GM12878 (cell line): ENCODE measurements at regions of chr3 and their contacts with region 1.

Region 1: GRCh38 chr3:167684388-167684993 is 30.7 kb upstream of the WDR49 start:
- DNase-seq: no peak
- ATAC-seq: peak; percentile 92
- H3K4me3 ChIP-seq: no peak overlapping the region
- H3K27ac ChIP-seq: no peak overlapping the region
- H3K4me1 ChIP-seq: no peaks in the 10 kb centered on the region
- H3K27me3 ChIP-seq: no peaks in the 10 kb centered on the region
- CTCF ChIP-seq: peak; percentile 48 to 58 (median 58); a peak in 5 of 6 replicates
- EP300 ChIP-seq: no peak
- POLR2A ChIP-seq: no peak
- RAD21 ChIP-seq: peak; percentile 51

Region 2: DNA sequence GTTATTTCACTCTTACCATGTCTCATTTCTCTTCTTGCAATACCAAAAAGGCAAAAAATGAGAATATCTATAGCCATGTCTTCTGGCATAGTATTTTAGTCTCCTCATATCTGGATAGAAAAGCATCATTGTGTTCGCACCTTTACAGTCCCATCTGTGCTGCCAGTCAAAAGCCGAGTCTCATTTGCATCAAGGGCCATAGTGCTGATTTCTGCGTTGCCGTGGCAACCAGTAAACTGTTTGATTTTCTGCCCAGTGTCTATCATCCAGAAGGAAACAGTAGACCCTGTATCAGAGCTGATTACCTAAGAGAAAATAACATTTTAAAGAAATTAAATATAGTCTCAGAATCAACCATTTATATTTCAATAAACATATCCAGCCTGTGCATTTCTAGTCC is 124.6 kb before region 1 on chr3:
- CTCF ChIA-PET with region 1: no interaction called
- POLR2A ChIA-PET with region 1: no interaction called
- RAD21 ChIA-PET with region 1: no interaction called
- SMC1A ChIA-PET with region 1: no interaction called
- in situ Hi-C with region 1: no loop called
- intact Hi-C with region 1: no loop called
- DNase-seq: no peak
- ATAC-seq: no peak
- H3K4me3 ChIP-seq: no peak overlapping the region
- H3K27ac ChIP-seq: no peak overlapping the region
- H3K4me1 ChIP-seq: no peaks in the 10 kb centered on the region
- H3K27me3 ChIP-seq: no peaks in the 10 kb centered on the region
- CTCF ChIP-seq: no peak
- EP300 ChIP-seq: no peak
- POLR2A ChIP-seq: no peak
- RAD21 ChIP-seq: no peak

Region 3: DNA sequence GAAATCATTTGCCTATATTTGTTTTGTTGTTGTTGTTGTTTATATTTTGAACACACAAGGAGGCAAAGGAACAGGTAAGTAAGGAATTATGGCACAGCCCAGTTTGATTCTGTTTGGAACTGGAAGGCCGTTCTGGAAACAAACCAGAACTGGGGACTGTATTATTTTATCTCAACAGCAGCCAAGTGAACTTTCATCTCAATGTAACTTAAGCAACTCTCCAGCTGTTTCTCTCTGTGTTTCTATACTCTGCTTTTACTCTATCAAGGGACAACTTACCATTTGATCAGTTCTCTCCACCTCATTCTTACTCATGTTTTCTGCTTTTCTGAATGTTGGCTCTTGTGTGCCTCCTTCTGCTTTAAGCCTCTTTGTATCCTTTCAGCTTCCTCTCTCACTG is 14.8 kb before region 1 on chr3:
- CTCF ChIA-PET with region 1: interaction called, 24 read pairs
- POLR2A ChIA-PET with region 1: no interaction called
- RAD21 ChIA-PET with region 1: no interaction called
- SMC1A ChIA-PET with region 1: interaction called, 5 read pairs
- in situ Hi-C with region 1: no loop called
- intact Hi-C with region 1: no loop called
- DNase-seq: no peak
- ATAC-seq: no peak
- H3K4me3 ChIP-seq: no peak overlapping the region
- H3K27ac ChIP-seq: no peak overlapping the region
- H3K4me1 ChIP-seq: no peaks in the 10 kb centered on the region
- H3K27me3 ChIP-seq: no peaks in the 10 kb centered on the region
- CTCF ChIP-seq: no peak
- EP300 ChIP-seq: no peak
- POLR2A ChIP-seq: no peak
- RAD21 ChIP-seq: no peak

Region 4: DNA sequence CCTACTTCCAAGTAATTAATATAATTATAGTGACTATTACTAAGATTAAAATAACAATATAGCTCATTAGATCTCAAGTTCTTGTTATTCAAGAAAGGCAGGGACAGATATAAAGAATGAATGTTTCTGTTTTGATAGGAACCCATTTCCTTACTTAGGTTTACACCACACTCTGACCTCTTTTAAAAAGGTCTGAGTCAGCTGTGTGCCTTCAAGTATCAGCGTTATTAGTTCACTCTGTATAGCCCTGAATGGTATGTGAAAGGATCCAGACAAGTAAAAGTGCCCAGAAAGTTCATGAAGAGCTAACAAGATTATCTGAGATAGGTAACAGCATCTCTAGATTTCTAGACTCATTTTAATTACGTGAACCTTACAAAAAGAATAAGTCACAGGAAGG is 21.3 kb after region 1 on chr3:
- CTCF ChIA-PET with region 1: interaction called, 18 read pairs
- POLR2A ChIA-PET with region 1: no interaction called
- RAD21 ChIA-PET with region 1: interaction called, 3 read pairs
- SMC1A ChIA-PET with region 1: interaction called, 3 read pairs
- in situ Hi-C with region 1: no loop called
- intact Hi-C with region 1: no loop called
- DNase-seq: no peak
- ATAC-seq: no peak
- H3K4me3 ChIP-seq: no peak overlapping the region
- H3K27ac ChIP-seq: no peak overlapping the region
- H3K4me1 ChIP-seq: no peaks in the 10 kb centered on the region
- H3K27me3 ChIP-seq: no peaks in the 10 kb centered on the region
- CTCF ChIP-seq: no peak
- EP300 ChIP-seq: no peak
- POLR2A ChIP-seq: no peak
- RAD21 ChIP-seq: no peak

Region 5: DNA sequence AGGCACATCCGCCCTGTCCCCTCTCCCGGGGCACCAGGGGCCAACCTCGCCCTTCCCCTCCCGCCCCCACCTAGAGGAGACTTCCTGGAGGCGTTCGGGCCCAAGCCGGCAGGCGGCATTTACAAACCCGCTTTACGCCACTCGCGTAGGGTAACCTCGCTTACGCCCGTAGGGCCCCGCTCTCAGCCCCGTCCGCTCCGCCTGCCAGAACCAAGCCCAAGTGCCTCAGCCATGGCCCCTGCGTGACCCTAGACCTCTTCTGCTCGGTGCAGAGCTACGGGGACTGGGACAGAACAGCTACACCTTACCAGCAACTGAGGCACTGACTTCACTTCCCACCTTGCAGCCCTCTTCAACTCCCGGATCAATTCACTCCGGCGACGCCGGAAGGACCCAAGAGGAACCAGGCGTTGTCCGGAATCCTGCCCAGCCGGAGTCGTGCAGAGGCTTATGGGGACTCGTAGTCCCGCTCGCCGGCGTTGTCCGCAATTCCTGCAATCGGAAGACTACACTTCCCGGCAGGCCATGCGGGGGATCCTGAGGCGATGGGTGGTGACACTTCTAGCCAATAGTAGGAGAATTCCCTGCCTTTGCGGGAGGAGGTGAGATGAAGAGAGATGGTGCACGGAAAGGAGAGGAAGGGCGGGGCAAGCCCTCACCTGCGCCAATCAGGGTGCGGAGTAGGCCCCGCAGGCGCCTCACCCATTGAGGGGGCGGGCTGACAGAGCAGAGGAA is 50.2 kb after region 1 on chr3 and contains the start of gene PDCD10:
- CTCF ChIA-PET with region 1: interaction called, 42 read pairs
- POLR2A ChIA-PET with region 1: no interaction called
- RAD21 ChIA-PET with region 1: interaction called, 5 read pairs
- SMC1A ChIA-PET with region 1: interaction called, 7 read pairs
- in situ Hi-C with region 1: no loop called
- intact Hi-C with region 1: no loop called
- DNase-seq: peak; percentile 98
- ATAC-seq: peak; percentile 91
- H3K4me3 ChIP-seq: peak within 1 kb of the TSS; percentile 97
- H3K27ac ChIP-seq: peak within 1 kb of the TSS; percentile 86
- H3K4me1 ChIP-seq: peaks cover 3% of the 10 kb centered on the region; the same call in 1 of the 2 replicates
- H3K27me3 ChIP-seq: no peaks in the 10 kb centered on the region
- CTCF ChIP-seq: 0 out of 6 replicates have a peak, but pooled peaks of 1 of the 3 experiments have one; percentile 7
- EP300 ChIP-seq: no peak
- POLR2A ChIP-seq: peak; percentile 85
- RAD21 ChIP-seq: no peak
- polyA plus RNA-seq, gene PDCD10: 199 to 247 TPM

Region 6: DNA sequence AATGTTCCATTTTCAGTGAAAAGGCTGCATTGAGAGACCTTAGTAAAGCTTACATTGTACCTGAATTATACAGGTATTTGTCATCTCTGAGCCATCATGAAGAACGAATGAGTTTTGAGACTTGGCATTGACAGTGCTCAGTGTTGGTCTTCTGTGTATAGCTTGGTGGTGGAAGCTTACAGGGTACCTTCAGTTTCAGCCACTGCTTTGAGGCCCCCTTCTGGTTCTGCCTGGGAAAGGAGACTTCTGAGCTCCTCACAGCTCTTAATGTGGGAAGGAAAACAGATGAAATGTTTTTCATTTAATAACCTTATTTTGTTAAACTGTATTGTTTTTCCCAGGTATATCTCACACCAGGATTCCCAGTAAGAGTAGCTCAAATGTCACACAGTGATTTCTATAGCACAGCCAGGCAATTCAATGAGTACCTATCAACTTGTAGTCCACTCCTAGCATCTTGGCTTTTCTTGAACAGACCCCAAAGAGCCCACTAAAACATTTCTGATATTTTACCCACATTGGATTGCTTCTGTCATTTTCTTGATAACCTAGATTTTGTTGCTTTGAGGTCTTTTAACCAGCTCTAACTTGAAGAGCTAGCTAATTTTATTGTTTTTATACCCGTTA is 56.6 kb after region 1 on chr3:
- CTCF ChIA-PET with region 1: interaction called, 42 read pairs
- POLR2A ChIA-PET with region 1: no interaction called
- RAD21 ChIA-PET with region 1: interaction called, 10 read pairs
- SMC1A ChIA-PET with region 1: interaction called, 16 read pairs
- in situ Hi-C with region 1: no loop called
- intact Hi-C with region 1: no loop called
- DNase-seq: no peak
- ATAC-seq: peak; percentile 97
- H3K4me3 ChIP-seq: no peak overlapping the region
- H3K27ac ChIP-seq: no peak overlapping the region
- H3K4me1 ChIP-seq: no peaks in the 10 kb centered on the region
- H3K27me3 ChIP-seq: no peaks in the 10 kb centered on the region
- CTCF ChIP-seq: peak; percentile 60 to 71 (median 69)
- EP300 ChIP-seq: no peak
- POLR2A ChIP-seq: no peak
- RAD21 ChIP-seq: peak; percentile 65

Region 7: DNA sequence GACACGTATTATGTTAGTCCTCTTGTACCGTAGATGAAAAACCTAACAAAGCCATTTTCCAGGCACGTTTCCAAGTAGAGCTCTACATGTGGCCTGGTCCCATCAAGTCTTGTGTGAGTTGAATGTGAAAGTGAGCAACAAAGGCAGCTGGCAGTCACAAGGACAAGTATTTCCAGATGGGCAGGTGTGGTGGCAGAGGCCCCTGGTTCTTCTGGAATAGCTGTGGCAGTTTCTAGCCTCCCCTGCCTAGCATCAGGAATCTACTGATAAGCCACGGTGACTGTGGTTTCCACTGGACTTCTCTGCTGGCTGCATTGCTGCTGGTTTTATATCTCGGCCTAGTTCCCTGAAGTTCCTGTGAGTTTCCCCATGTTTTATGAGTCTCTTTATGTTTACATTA is 293.5 kb after region 1 on chr3:
- CTCF ChIA-PET with region 1: no interaction called
- POLR2A ChIA-PET with region 1: no interaction called
- RAD21 ChIA-PET with region 1: no interaction called
- SMC1A ChIA-PET with region 1: no interaction called
- in situ Hi-C with region 1: no loop called
- intact Hi-C with region 1: no loop called
- DNase-seq: no peak
- ATAC-seq: no peak
- H3K4me3 ChIP-seq: no peak overlapping the region
- H3K27ac ChIP-seq: no peak overlapping the region
- H3K4me1 ChIP-seq: no peaks in the 10 kb centered on the region
- H3K27me3 ChIP-seq: no peaks in the 10 kb centered on the region; a peak in 2 of 4 replicates
- CTCF ChIP-seq: no peak
- EP300 ChIP-seq: no peak
- POLR2A ChIP-seq: no peak
- RAD21 ChIP-seq: no peak